Mammary epithelial cell (primary cell): ENCODE measurements at regions of chr6 and their contacts with region 1.

Region 1: GRCh38 chr6:159693128-159693893 is at the start of gene SOD2:
- DNase-seq: peak; percentile 81
- H3K4me3 ChIP-seq: peak within 1 kb of the TSS; percentile 67 to 91 (median 82)
- H3K27ac ChIP-seq: peak within 1 kb of the TSS; percentile 58
- H3K4me1 ChIP-seq: peaks cover 25% of the 10 kb centered on the region
- H3K27me3 ChIP-seq: no peaks in the 10 kb centered on the region
- CTCF ChIP-seq: no peak
- total RNA-seq, gene SOD2: 105 to 145 TPM

Region 2: DNA sequence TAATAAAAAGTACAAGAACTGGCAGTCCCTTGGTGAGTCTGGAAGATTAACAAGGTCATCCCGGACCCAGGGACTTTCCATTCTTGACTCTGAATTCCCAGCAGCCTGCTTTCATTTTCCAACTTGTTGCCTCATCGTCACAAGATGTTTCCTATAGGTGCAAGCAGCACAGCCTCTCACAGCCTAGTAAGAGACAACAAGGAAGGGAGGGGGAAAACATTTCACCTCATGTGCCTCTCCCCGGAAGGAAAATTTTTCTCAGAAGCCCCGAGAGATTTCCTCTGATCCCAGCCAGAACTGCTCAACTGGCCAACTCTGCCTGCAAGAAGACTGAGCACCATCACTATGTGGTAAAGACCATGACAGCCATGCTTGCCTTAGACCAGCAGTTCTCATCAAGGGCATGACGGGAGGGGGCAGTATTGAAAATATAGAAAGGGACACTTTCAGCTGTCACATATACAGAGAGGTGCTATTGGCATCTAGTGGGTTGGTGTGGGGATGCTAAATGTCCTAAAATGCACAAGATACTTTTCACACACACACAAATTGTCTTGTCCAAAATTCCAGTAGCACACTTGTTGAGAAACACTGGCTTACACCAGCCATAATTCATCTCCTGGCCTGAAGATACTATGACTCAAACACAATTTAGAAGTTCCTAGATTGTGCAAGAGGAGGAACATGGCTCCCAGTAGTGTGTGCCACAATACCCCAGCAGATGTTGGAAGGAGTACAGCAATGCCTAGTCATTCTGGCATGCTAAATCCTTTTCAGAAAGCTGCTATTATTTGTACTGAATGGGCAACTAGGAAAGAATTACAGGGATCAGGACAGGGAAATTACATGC is 23.2 kb after region 1 on chr6:
- CTCF ChIA-PET with region 1: no interaction called
- dilution Hi-C with region 1: no loop called
- in situ Hi-C with region 1: no loop called
- intact Hi-C with region 1: no loop called
- DNase-seq: peak; percentile 96
- H3K4me3 ChIP-seq: no peak overlapping the region
- H3K27ac ChIP-seq: peak overlapping the region; percentile 80
- H3K4me1 ChIP-seq: peaks cover 16% of the 10 kb centered on the region
- H3K27me3 ChIP-seq: no peaks in the 10 kb centered on the region
- CTCF ChIP-seq: no peak

Region 3: DNA sequence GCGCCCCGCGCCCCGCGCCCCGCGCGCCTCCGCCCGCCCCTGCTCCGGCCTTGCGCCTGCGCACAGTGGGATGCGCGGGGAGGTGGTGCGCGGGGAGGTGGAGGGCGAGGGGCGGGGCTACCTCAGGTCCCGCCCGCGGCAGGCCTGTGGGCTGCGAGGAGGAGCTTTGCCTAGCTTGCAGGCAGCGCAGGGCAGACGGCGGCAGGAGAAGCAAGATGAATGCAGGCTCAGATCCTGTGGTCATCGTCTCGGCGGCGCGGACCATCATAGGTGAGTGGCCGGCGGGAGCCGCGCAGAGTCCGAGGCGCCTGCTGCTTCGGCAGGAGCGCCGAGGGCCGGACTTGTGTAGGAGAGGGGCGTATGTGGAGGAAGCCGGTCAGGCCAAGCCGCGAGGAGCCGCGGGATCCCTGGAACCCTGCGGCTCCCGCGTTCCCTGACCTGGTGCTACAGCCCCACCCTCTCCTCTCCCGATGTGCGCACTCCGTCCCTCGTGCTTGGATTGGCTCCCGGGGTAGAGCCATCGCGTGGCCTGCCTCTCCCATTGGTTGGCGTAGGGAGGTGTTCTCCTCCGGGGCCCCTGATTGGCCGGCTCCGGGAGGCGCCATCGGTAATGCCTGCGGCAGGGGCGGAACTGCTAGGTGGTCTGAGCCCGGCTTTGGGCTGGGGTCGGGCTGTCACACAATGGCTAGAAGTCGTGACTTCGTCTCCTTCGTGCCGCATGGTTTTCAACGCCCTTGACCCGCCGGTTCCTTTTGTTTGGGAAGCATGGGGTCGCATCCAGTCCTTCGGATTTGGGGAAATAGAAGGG is 68.8 kb after region 1 on chr6 and contains the start of gene ACAT2:
- CTCF ChIA-PET with region 1: no interaction called
- dilution Hi-C with region 1: no loop called
- in situ Hi-C with region 1: no loop called
- intact Hi-C with region 1: loop called (anchors 1 kb)
- DNase-seq: peak; percentile 95
- H3K4me3 ChIP-seq: peak within 1 kb of the TSS; percentile 49 to 72 (median 65)
- H3K27ac ChIP-seq: peak within 1 kb of the TSS; percentile 68
- H3K4me1 ChIP-seq: peaks cover 26% of the 10 kb centered on the region
- H3K27me3 ChIP-seq: no peaks in the 10 kb centered on the region
- CTCF ChIP-seq: no peak
- total RNA-seq, gene ACAT2: 39.3 to 235 TPM

Region 4: GRCh38 chr6:159852877-159853276 is 159.6 kb after region 1 on chr6:
- CTCF ChIA-PET with region 1: no interaction called
- dilution Hi-C with region 1: no loop called
- in situ Hi-C with region 1: no loop called
- intact Hi-C with region 1: loop called (anchors 1 kb)
- DNase-seq: no peak
- H3K4me3 ChIP-seq: no peak overlapping the region
- H3K27ac ChIP-seq: no peak overlapping the region
- H3K4me1 ChIP-seq: no peaks in the 10 kb centered on the region
- H3K27me3 ChIP-seq: no peaks in the 10 kb centered on the region
- CTCF ChIP-seq: peak; percentile 23 to 51

Region 5: GRCh38 chr6:160041608-160042007 is 348.3 kb after region 1 on chr6:
- CTCF ChIA-PET with region 1: no interaction called
- dilution Hi-C with region 1: no loop called
- in situ Hi-C with region 1: no loop called
- intact Hi-C with region 1: loop called (anchors 5 kb)
- DNase-seq: peak; percentile 82
- H3K4me3 ChIP-seq: no peak overlapping the region
- H3K27ac ChIP-seq: peak overlapping the region; percentile 65
- H3K4me1 ChIP-seq: peaks cover 44% of the 10 kb centered on the region
- H3K27me3 ChIP-seq: no peaks in the 10 kb centered on the region
- CTCF ChIP-seq: peak; percentile 42 to 56